Activated T-helper 2 cell treated with anti-CD3 and anti-CD28 coated beads, Interferon-gamma antibody, Interleukin-2, Interleukin-4, amounts not matched to agents 10 μg/mL and 5 μg/mL and 100 μg/mL, durations not matched to agents 14 hours and 24 hours and 36 hours (primary cell): ENCODE measurements at regions of chr20 and their contacts with region 1.

Region 1: DNA sequence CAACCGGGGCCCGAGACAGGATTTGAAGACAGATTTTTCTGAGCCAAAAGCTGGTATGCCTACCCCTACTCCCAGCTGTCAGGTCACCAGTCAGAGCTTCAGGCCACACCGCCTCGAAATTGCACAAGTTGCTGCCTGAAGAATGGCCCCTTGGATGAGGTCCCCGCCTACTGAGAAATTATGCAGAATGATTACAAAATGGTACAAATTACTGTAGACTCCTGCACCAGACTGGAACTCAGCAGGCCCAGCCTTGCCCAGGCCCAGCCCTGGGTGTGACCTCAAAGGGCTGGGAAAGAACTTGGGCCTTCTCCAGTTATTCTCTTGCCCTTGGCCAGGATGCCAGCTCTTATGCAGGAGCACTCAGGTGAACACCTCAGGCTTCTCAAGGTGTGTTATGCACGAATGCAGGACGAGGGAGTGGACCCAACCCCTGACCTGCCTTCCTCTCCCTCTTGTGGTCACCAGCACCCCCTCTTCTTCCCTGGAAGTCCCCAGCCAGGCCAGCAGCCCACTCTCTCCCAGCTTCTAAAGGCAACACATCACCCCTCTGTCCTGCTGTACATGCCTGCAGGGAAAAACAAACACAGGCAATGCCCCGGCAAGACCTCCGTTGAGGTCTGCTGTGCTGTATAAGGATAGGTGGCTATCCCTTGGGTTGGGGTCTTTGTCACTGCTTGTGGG is 88.7 kb upstream of the NAA20 start:
- DNase-seq: no peak
- H3K4me3 Mint-ChIP-seq: no peak overlapping the region
- H3K27ac Mint-ChIP-seq: no peak overlapping the region
- H3K4me1 Mint-ChIP-seq: no peaks in the 10 kb centered on the region
- H3K27me3 Mint-ChIP-seq: peaks cover 12% of the 10 kb centered on the region

Region 2: GRCh38 chr20:20060234-20060998 is 131.9 kb after region 1 on chr20:
- intact Hi-C with region 1: loop called (anchors 5 kb)
- DNase-seq: no peak
- H3K4me3 Mint-ChIP-seq: no peak overlapping the region
- H3K27ac Mint-ChIP-seq: no peak overlapping the region
- H3K4me1 Mint-ChIP-seq: no peaks in the 10 kb centered on the region
- H3K27me3 Mint-ChIP-seq: peaks cover 24% of the 10 kb centered on the region

Region 3: DNA sequence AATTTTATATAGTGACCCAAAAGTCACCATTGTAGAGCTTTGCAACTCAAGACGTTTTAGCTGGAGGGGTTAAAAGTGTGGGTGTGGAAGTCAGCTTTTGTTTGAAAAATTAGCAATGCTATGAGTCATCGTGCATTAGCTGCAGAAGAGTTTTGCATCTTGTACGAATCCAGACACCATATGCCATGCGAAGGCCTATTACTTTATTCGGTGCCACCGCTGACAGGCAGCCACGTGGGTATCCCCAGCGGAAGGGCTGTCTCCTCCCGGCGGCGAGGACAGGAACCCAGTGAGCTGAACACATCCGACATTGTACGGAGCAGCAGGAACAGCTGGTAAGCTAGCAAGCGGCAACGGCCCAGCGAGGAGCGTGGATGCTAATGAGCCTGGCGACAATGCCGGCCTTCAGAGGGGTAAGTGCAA is 523.8 kb after region 1 on chr20:
- intact Hi-C with region 1: no loop called
- DNase-seq: peak; percentile 39
- H3K4me3 Mint-ChIP-seq: peak overlapping the region; percentile 82
- H3K27ac Mint-ChIP-seq: peak overlapping the region; percentile 82
- H3K4me1 Mint-ChIP-seq: peaks cover 43% of the 10 kb centered on the region
- H3K27me3 Mint-ChIP-seq: no peaks in the 10 kb centered on the region